HepG2 (cell line): ENCODE measurements at regions of chr14 and their contacts with region 1.

Region 1: GRCh38 chr14:102150744-102151143 is 11.0 kb downstream of the WDR20 start:
- DNase-seq: peak; percentile 43
- ATAC-seq: peak; percentile 62
- H3K4me3 ChIP-seq: no peak overlapping the region
- H3K27ac ChIP-seq: peak overlapping the region; percentile 27
- H3K4me1 ChIP-seq: peaks cover 69% of the 10 kb centered on the region
- H3K27me3 ChIP-seq: no peaks in the 10 kb centered on the region
- CTCF ChIP-seq: no peak
- EP300 ChIP-seq: no peak
- POLR2A ChIP-seq: no peak
- RAD21 ChIP-seq: no peak

Region 2: DNA sequence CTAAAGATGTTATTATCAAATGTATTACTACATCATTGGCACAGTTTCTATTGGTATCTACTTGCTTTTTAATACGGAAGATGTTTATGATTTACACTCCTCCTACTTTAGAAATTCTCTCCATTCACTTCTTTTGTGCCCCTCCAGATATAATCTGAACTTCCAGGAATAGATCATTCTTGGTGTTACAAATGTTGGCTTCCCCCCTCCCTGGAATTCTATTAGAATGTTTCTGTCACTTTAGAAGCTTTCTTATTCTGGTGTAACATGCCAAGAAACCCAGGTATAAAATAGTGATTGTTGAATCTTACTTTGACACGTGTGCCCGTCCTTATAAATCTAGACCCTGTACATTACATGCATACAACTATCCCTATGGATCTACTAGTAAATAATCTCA is 12.2 kb before region 1 on chr14:
- CTCF ChIA-PET with region 1: no interaction called
- POLR2A ChIA-PET with region 1: no interaction called
- in situ Hi-C with region 1: no loop called
- intact Hi-C with region 1: no loop called
- DNase-seq: no peak
- ATAC-seq: no peak
- H3K4me3 ChIP-seq: peak overlapping the region; percentile 78 to 93 (median 92)
- H3K27ac ChIP-seq: peak overlapping the region; percentile 51
- H3K4me1 ChIP-seq: peaks cover 15% of the 10 kb centered on the region
- H3K27me3 ChIP-seq: no peaks in the 10 kb centered on the region; a peak in 1 of 5 replicates
- CTCF ChIP-seq: no peak
- EP300 ChIP-seq: no peak
- POLR2A ChIP-seq: no peak
- RAD21 ChIP-seq: no peak

Region 3: DNA sequence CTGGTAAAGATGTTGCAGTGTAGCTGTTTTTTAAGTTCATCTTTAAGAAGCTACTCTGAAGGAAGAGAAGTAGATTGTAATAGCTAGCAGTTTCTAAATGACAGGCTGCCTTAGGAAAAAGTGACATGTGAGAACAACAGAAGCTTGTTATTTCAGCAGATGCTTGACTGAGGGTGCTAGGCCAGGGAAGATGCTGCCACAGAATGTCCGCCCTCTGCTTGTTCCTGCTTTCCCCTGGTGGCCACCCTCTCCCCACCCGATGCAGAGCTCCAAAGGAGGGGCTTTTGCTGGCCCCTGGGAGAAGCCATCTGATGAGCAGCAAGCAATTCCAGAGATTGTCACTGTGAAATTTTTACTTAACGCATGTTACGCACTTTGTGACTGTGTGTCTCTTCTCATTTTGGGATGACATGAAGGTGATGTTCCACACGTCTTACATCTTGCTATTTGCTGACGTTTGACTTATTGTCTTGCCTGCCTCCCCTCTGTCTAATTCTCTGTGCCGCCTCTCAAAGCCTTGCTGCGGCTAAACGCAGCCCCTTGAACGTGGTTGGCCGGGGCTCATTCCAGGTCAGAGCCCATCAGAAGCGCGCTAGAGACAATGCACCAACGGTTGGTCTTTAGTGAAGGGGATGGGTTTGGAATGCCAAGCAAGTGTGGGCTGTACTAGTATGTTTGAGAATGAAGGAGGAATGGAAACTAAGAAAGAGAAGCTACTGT is 33.7 kb after region 1 on chr14:
- CTCF ChIA-PET with region 1: no interaction called
- POLR2A ChIA-PET with region 1: no interaction called
- in situ Hi-C with region 1: no loop called
- intact Hi-C with region 1: loop called (anchors 2 kb)
- DNase-seq: no peak
- ATAC-seq: no peak
- H3K4me3 ChIP-seq: no peak overlapping the region; a peak in 1 of 6 replicates
- H3K27ac ChIP-seq: peak overlapping the region; percentile 46
- H3K4me1 ChIP-seq: peaks cover 46% of the 10 kb centered on the region
- H3K27me3 ChIP-seq: no peaks in the 10 kb centered on the region
- CTCF ChIP-seq: no peak
- EP300 ChIP-seq: no peak
- POLR2A ChIP-seq: no peak
- RAD21 ChIP-seq: no peak